Ovary (tissue), 10 donors: ENCODE measurements at regions of chr9 and their contacts with region 1.

Region 1: DNA sequence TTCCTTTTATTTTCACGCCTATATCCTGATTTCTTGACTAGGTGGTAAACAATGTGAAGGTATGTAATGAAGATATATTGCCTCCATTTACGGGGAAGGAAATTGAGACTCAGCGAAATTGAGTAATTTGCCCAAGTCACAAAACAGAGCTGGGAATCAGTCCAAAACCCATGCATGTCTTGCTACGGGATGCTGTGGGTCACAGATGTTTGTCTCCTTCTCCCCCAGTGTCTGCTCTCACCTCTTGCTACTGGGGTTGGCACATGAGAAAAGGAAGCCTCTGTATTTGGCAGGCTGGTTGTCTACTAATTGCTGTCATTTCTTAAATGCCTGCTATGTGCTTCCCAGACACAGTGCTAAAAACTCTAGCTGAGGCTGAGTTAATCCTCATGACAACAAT is 53.7 kb upstream of the TEX48 start:
- DNase-seq: no peak
- H3K4me3 ChIP-seq: no peak overlapping the region
- H3K27ac ChIP-seq: no peak overlapping the region
- H3K4me1 ChIP-seq: no peaks in the 10 kb centered on the region
- H3K27me3 ChIP-seq: no peaks in the 10 kb centered on the region
- CTCF ChIP-seq: no peak
- EP300 ChIP-seq: no peak
- POLR2A ChIP-seq: no peak

Region 2: DNA sequence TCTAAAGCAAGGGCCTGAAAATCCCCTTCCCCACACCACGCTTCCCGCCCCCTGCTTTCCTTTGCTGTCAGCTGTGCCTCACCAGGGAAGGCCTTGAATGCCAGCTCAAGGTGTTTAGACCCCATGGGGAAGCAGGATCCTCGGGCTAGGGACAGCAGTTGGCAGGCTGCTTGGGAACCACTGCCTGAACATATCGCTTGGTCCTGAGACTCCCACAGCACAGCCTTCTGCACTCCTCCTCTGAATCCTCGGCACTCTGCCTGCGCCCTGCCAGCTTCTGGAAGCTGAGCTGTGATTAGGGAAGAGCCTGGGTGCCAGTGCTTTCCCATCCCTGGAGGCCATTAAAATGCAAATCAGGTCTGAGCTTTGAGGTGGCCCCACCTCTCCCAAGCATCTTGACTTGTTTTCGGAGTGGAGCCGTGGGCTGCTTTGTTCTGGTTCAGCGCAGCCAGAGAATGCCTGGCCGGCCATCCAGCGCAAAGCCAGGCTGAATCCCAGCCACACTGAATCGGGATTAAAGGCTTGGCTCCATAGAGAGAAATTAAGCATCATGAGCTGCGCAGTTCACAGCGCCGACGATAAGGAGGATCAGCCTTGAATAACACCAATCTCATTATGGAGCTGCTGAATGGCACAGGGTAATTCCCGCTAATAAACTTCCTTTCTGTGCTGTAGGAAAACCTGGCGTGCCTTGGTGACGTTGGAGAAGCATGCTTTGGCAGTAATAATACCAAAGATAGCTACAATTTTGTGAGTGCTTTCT is 697.6 kb before region 1 on chr9:
- intact Hi-C with region 1: no loop called
- DNase-seq: no peak
- H3K4me3 ChIP-seq: no peak overlapping the region
- H3K27ac ChIP-seq: no peak overlapping the region
- H3K4me1 ChIP-seq: no peaks in the 10 kb centered on the region
- H3K27me3 ChIP-seq: no peaks in the 10 kb centered on the region
- CTCF ChIP-seq: no peak
- EP300 ChIP-seq: no peak
- POLR2A ChIP-seq: no peak

Region 3: GRCh38 chr9:115524453-115525059 is 788.8 kb after region 1 on chr9:
- intact Hi-C with region 1: loop called in 1 of 4 experiments (anchors 2 kb)
- DNase-seq: no peak
- H3K4me3 ChIP-seq: no peak overlapping the region
- H3K27ac ChIP-seq: no peak overlapping the region
- H3K4me1 ChIP-seq: no peaks in the 10 kb centered on the region
- H3K27me3 ChIP-seq: no peaks in the 10 kb centered on the region
- CTCF ChIP-seq: no peak
- EP300 ChIP-seq: no peak
- POLR2A ChIP-seq: no peak